H1 (cell line): ENCODE measurements at regions of chr16 and their contacts with region 1.

Region 1: GRCh38 chr16:89860747-89861304 is 12.6 kb upstream of the TCF25 start:
- DNase-seq: peak; percentile 65 to 97
- H3K4me3 ChIP-seq: no peak overlapping the region
- H3K27ac ChIP-seq: no peak overlapping the region
- H3K4me1 ChIP-seq: peaks cover 0 to 2% (median 0%) of the 10 kb centered on the region in 4 experiments; a peak in 2 of 7 replicates
- H3K27me3 ChIP-seq: no peaks in the 10 kb centered on the region
- CTCF ChIP-seq: peak; percentile 95 to 98 (median 95)
- EP300 ChIP-seq: no peak
- POLR2A ChIP-seq: no peak
- RAD21 ChIP-seq: peak; percentile 98

Region 2: DNA sequence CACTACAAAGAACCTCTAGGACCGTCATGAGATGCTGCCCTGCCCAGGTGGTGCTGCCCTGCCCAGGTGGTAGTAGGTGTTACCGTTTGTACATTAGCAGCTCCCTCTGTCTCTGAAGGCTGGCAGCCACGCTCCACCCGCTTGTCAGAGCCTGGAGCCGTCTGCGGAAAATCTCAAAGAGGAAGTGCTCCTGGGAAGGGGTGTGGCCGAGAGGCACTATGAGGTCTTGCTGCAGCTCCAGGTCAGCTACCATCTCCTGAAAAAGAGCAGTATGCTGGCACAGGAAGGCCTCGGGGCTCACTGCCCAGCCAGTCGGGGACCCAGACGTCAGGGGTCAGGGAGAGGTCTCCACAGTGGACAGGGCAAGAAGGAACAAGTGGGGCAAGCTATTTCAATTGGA is 111.2 kb before region 1 on chr16:
- CTCF ChIA-PET with region 1: interaction called, 17 read pairs
- POLR2A ChIA-PET with region 1: no interaction called
- DNase-seq: no peak
- H3K4me3 ChIP-seq: no peak overlapping the region
- H3K27ac ChIP-seq: no peak overlapping the region
- H3K4me1 ChIP-seq: no peaks in the 10 kb centered on the region
- H3K27me3 ChIP-seq: no peaks in the 10 kb centered on the region
- CTCF ChIP-seq: no peak
- EP300 ChIP-seq: no peak
- POLR2A ChIP-seq: no peak
- RAD21 ChIP-seq: no peak

Region 3: GRCh38 chr16:89805136-89805905 is 55.5 kb before region 1 on chr16:
- CTCF ChIA-PET with region 1: interaction called, 27 read pairs
- POLR2A ChIA-PET with region 1: interaction called, 6 read pairs
- DNase-seq: no peak
- H3K4me3 ChIP-seq: no peak overlapping the region
- H3K27ac ChIP-seq: no peak overlapping the region
- H3K4me1 ChIP-seq: no peaks in the 10 kb centered on the region
- H3K27me3 ChIP-seq: no peaks in the 10 kb centered on the region
- CTCF ChIP-seq: no peak
- EP300 ChIP-seq: no peak
- POLR2A ChIP-seq: no peak
- RAD21 ChIP-seq: no peak

Region 4: GRCh38 chr16:89828199-89828778 is 32.5 kb before region 1 on chr16 and contains the start of gene SPIRE2:
- CTCF ChIA-PET with region 1: interaction called, 13 read pairs
- POLR2A ChIA-PET with region 1: interaction called, 7 read pairs
- DNase-seq: peak in 1 of 2 experiments; percentile 88
- H3K4me3 ChIP-seq: peak within 1 kb of the TSS; percentile 42 to 83 (median 63)
- H3K27ac ChIP-seq: no peak within 1 kb of the TSS
- H3K4me1 ChIP-seq: peaks cover 0 to 9% (median 5%) of the 10 kb centered on the region in 4 experiments; a peak in 4 of 7 replicates
- H3K27me3 ChIP-seq: no peaks in the 10 kb centered on the region
- CTCF ChIP-seq: no peak
- EP300 ChIP-seq: no peak
- POLR2A ChIP-seq: no peak
- RAD21 ChIP-seq: no peak
- total RNA-seq, gene SPIRE2: 12.2 and 15.4 TPM in 2 replicates

Region 5: DNA sequence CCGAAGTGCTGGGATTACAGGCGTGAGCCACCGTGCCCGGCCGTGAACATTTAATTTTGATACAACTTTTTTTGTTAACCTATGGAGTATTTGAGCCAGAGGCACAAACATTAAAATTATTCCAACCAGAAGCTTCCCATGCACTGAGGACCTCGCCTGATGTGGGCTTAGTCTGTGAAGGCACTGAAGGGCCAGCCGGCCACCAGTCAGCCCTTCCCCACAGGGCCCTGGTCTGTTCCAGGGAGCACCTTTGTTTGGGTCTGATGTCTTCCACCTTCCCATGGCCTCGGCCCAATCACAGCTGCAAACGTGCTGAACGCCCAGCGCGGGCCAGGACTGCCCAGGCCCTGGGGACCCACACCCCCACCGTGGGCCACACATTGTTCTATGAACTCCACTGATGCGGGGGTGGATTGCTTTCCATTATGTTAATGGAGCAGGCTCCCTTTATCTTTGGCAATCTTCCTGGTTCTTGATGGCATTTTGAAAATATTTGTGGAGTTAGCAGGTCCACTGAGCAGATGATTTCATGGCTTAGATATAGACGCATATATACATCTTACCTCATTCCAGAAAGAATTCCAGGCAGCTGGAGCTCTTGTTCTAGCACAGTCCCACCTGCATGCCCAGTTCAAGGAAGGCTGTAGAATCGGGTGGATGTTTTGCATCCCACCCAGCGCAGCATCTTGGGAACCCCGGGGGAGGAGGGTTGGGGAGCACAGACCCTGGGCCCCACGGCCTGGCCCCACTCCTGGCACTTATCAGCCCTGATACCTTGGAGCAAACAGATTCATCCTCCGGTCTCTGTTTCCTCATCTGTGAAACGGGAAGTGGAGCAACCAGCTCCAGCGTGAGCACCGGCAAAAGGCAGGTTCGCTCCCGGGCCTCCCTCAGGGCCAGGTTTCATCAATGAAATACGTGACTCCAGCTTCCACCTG is 18.1 kb before region 1 on chr16:
- CTCF ChIA-PET with region 1: interaction called, 21 read pairs
- POLR2A ChIA-PET with region 1: no interaction called
- DNase-seq: no peak
- H3K4me3 ChIP-seq: no peak overlapping the region
- H3K27ac ChIP-seq: no peak overlapping the region
- H3K4me1 ChIP-seq: peaks cover 0 to 5% (median 1%) of the 10 kb centered on the region in 4 experiments; a peak in 2 of 7 replicates
- H3K27me3 ChIP-seq: no peaks in the 10 kb centered on the region
- CTCF ChIP-seq: no peak
- EP300 ChIP-seq: no peak
- POLR2A ChIP-seq: no peak
- RAD21 ChIP-seq: no peak

Region 6: DNA sequence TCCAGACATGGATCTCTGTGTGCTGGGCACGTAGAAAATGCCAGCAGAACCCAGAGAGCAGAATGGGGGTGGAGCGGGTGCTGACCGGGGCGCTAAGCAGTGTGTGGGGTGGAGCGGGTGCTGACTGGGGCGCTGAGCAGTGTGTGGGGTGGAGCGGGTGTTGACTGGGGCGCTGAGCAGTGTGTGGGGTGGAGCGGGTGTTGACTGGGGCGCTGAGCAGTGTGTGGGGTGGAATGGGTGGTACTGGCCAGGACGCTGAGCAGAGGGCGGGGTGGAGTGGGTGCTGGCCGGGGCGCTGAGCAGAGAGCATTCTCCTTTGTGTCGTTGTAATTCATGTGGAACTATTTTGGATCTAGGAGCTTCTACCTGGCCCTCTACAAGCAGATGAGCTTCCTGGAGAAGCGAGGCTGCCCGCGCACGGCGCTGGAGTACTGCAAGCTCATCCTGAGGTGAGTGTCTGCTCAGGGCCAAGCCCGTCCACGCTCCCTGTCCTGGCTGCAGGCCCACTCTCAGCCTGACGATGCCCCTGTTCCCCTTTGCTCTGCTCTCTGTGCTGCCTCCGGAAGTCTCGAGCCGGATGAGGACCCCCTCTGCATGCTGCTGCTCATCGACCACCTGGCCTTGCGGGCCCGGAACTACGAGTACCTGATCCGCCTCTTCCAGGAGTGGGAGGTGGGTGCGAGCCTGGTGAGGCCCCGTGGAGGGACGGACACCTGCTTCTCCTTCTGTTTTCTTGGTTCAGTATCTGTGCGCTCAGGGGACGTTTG is 37.6 kb after region 1 on chr16:
- CTCF ChIA-PET with region 1: no interaction called
- POLR2A ChIA-PET with region 1: no interaction called
- DNase-seq: no peak
- H3K4me3 ChIP-seq: no peak overlapping the region
- H3K27ac ChIP-seq: no peak overlapping the region
- H3K4me1 ChIP-seq: no peaks in the 10 kb centered on the region
- H3K27me3 ChIP-seq: no peaks in the 10 kb centered on the region
- CTCF ChIP-seq: no peak
- EP300 ChIP-seq: no peak
- POLR2A ChIP-seq: no peak
- RAD21 ChIP-seq: no peak

Region 7: DNA sequence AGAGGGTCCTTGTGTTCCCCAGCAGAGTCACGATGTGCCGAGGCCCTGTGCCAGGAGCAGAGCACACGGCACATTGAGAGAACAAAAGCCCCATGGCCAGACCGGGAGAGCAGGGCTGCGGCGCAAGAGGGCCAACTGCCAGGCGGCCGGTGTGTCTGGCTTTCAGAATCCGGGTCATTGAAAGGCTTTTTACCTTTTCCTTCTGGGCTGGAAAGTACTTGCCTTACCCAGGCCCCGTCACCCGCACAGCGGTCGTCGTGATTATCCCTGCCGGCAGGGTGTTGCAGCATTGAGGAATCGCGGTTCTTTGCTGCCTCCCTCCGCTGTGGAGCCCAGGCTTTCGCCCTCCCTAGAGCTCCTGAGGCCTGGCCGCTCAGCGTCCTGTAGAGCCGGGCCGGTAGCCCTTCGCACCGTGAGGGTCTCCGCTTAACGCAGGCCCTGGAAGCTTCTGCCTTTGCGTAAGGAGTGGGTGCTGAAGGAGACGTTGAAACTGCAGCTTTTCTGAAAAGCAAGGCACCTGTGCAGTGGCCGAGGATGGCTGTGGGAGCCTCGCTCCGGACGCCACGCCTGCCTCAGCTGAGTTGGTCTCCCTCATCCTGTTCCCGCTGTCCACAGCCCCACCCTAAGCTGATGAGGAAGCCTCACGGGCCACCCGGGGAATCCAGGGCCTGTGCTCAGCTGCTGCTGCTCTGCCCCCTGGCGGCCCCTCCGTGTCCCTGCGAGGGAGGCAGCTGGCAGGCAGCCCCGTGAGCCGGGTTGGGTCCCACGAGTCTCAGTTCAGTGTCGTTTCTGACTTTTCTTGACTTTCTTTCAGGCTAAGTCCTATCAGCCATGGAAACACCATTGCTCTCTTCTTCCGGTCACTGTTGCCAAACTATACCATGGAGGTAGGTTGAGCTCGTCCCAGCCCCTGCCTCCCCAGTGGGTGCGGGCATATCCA is 49.2 kb after region 1 on chr16:
- CTCF ChIA-PET with region 1: interaction called, 18 read pairs
- POLR2A ChIA-PET with region 1: no interaction called
- DNase-seq: peak in 1 of 2 experiments; percentile 93
- H3K4me3 ChIP-seq: no peak overlapping the region
- H3K27ac ChIP-seq: peak overlapping the region; percentile 42; the same call in 1 of the 2 replicates
- H3K4me1 ChIP-seq: peaks cover 0 to 2% (median 0%) of the 10 kb centered on the region in 4 experiments; a peak in 4 of 7 replicates
- H3K27me3 ChIP-seq: no peaks in the 10 kb centered on the region
- CTCF ChIP-seq: peak; percentile 91 to 98 (median 97)
- EP300 ChIP-seq: no peak
- POLR2A ChIP-seq: no peak
- RAD21 ChIP-seq: peak; percentile 56 to 76

Region 8: GRCh38 chr16:90031931-90032687 is 171.3 kb after region 1 on chr16:
- CTCF ChIA-PET with region 1: no interaction called
- POLR2A ChIA-PET with region 1: no interaction called
- DNase-seq: no peak
- H3K4me3 ChIP-seq: no peak overlapping the region
- H3K27ac ChIP-seq: no peak overlapping the region
- H3K4me1 ChIP-seq: peaks cover 0 to 14% (median 7%) of the 10 kb centered on the region in 4 experiments; a peak in 5 of 7 replicates
- H3K27me3 ChIP-seq: no peaks in the 10 kb centered on the region
- CTCF ChIP-seq: no peak
- EP300 ChIP-seq: no peak
- POLR2A ChIP-seq: no peak
- RAD21 ChIP-seq: no peak